HCT116 (cell line): ENCODE measurements at regions of chr2 and their contacts with region 1.

Region 1: DNA sequence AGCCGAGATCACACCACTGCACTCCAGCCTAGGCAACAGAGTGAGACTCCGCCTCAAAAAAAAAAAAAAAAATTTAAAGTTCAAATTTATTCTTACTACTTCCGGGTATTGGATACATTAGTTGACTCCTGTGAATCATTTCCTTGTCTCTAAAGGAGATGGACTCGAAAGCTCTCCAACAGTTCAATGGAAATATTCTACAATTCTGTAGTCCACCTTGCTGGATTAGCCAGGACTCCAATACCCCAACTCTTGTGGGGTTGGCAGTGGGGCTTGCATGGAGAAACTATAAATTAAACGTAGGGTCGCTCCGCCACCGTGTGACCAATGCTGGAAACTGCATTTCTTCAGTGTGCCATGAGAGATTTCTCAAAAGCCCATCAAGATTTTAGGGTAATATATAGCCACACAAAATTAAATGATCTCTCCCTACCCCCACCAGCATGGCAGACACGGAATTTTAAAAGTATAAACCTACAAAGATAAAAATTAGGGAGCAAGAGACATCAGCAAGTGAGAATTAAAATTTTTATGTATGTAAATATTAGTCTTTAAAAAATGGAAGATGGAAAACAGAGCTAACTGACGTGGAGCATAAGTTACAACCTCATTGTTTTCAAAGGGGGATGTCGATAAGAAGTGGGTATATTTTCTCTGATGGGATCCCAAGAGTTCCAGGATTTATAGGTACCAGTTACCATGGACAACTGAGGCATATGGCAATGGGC is 27.8 kb upstream of the GAREM2 start:
- DNase-seq: peak; percentile 60
- ATAC-seq: peak; percentile 83
- H3K4me3 ChIP-seq: no peak overlapping the region
- H3K27ac ChIP-seq: no peak overlapping the region
- H3K4me1 ChIP-seq: peaks cover 3% of the 10 kb centered on the region in 2 experiments; a peak in 1 of 4 replicates
- H3K27me3 ChIP-seq: no peaks in the 10 kb centered on the region
- CTCF ChIP-seq: peak; percentile 75 to 92 (median 85)
- POLR2A ChIP-seq: no peak
- RAD21 ChIP-seq: peak; percentile 96

Region 2: DNA sequence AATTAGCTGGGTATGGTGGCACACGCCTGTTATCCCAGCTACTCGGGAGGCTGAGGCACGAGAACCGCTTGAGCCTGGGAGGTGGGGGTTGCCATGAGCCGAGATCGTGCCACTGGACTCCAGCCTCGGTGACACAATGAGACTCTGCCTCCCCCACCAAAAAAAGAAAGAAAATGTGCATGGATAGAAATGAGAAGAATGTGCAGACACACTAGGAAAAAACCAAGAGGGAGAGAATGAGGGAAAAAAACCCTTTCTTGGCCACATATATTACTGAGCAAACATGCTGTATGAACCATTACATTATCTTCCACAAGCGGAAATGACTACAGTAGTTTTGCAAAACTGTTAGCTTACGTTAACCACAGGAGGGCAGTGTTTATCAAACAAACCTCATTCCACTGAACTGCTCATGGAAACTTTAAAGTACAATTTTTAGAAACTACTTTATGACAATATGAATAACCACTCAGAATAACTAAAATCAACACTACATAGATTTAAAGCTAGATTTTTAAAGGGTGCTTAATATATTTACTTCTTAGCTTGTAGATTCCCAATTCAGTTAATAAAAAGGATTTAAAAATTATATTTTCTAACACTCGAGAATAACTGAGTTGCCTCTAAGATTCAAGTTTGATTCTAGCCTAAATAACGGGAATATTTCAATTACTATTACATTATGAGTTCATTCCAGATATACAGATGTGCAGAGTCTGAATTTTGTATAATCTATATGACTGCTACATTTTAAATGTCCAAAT is 293.2 kb before region 1 on chr2:
- CTCF ChIA-PET with region 1: interaction called, 7 read pairs
- POLR2A ChIA-PET with region 1: no interaction called
- RAD21 ChIA-PET with region 1: no interaction called
- intact Hi-C with region 1: loop called (anchors 2 kb)
- DNase-seq: peak; percentile 41
- ATAC-seq: peak; percentile 87
- H3K4me3 ChIP-seq: no peak overlapping the region
- H3K27ac ChIP-seq: no peak overlapping the region
- H3K4me1 ChIP-seq: peaks cover 0 to 9% of the 10 kb centered on the region in 2 experiments; a peak in 3 of 4 replicates
- H3K27me3 ChIP-seq: no peaks in the 10 kb centered on the region
- CTCF ChIP-seq: peak; percentile 62 to 75 (median 68); a peak in 5 of 6 replicates
- POLR2A ChIP-seq: no peak
- RAD21 ChIP-seq: peak; percentile 74

Region 3: DNA sequence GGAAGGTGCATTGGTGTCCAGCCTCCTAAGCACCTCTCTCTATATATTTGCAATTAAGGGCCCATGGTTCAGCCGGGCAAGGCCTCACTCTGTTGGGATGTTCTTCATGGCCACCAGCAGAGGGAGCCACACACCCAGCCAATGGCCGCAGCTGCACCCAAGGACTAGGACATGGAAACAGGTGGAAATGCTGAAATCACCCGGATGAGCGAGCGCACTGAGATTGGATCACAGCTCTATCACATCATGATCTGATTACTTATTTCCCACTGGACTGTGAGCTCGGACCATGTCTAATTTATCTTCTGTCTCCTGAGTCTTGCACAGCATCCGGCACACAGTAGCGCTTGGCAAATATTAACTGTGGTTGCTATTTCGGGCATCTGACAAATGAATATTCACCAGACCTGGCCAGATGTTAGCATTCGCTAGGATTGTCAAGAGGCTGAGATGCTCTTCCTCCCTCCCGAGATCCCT is 194.0 kb before region 1 on chr2:
- CTCF ChIA-PET with region 1: interaction called, 34 read pairs
- POLR2A ChIA-PET with region 1: no interaction called
- RAD21 ChIA-PET with region 1: no interaction called
- intact Hi-C with region 1: loop called (anchors 1 kb)
- DNase-seq: peak; percentile 88
- ATAC-seq: peak; percentile 97
- H3K4me3 ChIP-seq: peak overlapping the region in 1 of 2 experiments; percentile 10; a peak in 2 of 4 replicates
- H3K27ac ChIP-seq: no peak overlapping the region
- H3K4me1 ChIP-seq: peaks cover 0 to 12% of the 10 kb centered on the region in 2 experiments; a peak in 1 of 4 replicates
- H3K27me3 ChIP-seq: no peaks in the 10 kb centered on the region
- CTCF ChIP-seq: peak; percentile 89 to 97 (median 93)
- POLR2A ChIP-seq: no peak
- RAD21 ChIP-seq: peak; percentile 100

Region 4: GRCh38 chr2:25991965-25992364 is 153.2 kb before region 1 on chr2:
- CTCF ChIA-PET with region 1: interaction called, 8 read pairs
- POLR2A ChIA-PET with region 1: no interaction called
- RAD21 ChIA-PET with region 1: interaction called in 1 of 2 experiments, 3 read pairs
- intact Hi-C with region 1: loop called (anchors 1 kb)
- DNase-seq: no peak
- ATAC-seq: peak; percentile 39
- H3K4me3 ChIP-seq: no peak overlapping the region
- H3K27ac ChIP-seq: no peak overlapping the region
- H3K4me1 ChIP-seq: peaks cover 5 to 11% of the 10 kb centered on the region in 2 experiments; a peak in 2 of 4 replicates
- H3K27me3 ChIP-seq: no peaks in the 10 kb centered on the region
- CTCF ChIP-seq: no peak
- POLR2A ChIP-seq: no peak
- RAD21 ChIP-seq: no peak

Region 5: DNA sequence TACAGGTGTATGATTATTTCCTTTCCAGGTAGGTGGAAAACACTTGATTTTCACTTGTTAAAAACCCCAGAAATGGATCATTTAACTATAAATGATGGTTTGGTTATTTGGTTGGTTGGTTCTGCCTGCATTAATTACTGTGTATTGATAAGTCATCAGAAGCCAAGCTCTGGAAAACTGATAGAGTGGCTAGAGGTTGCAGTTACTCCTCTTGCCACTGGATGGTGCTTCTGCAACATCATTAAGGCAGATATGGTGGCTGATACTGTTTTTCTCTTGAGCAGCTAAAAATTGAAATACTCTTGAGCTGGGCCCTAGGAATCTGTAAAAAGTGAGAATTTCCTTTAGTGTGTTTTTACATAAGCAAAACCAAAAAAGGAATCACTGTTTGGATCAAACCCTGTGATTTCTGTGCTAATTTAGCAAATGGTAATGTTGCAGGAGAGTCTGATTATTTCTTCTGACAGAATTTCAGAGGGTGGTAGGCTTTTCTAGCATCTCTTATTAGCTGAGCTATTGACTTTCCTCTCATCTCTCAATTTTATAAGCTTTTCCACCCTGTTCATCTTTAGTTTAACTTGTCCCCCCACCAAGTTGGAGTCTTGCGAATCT is 57.0 kb before region 1 on chr2:
- CTCF ChIA-PET with region 1: interaction called, 6 read pairs
- POLR2A ChIA-PET with region 1: no interaction called
- RAD21 ChIA-PET with region 1: no interaction called
- intact Hi-C with region 1: loop called (anchors 2 kb)
- DNase-seq: no peak
- ATAC-seq: peak; percentile 65
- H3K4me3 ChIP-seq: no peak overlapping the region
- H3K27ac ChIP-seq: no peak overlapping the region
- H3K4me1 ChIP-seq: peaks cover 18 to 32% of the 10 kb centered on the region in 2 experiments
- H3K27me3 ChIP-seq: no peaks in the 10 kb centered on the region
- CTCF ChIP-seq: peak; percentile 31 to 85 (median 74); a peak in 5 of 6 replicates
- POLR2A ChIP-seq: no peak
- RAD21 ChIP-seq: peak; percentile 68

Region 6: GRCh38 chr2:26469092-26469710 is 324.1 kb after region 1 on chr2:
- CTCF ChIA-PET with region 1: no interaction called
- POLR2A ChIA-PET with region 1: no interaction called
- RAD21 ChIA-PET with region 1: no interaction called
- intact Hi-C with region 1: loop called (anchors 5 kb)
- DNase-seq: peak; percentile 74
- ATAC-seq: peak; percentile 70
- H3K4me3 ChIP-seq: no peak overlapping the region
- H3K27ac ChIP-seq: no peak overlapping the region
- H3K4me1 ChIP-seq: no peaks in the 10 kb centered on the region
- H3K27me3 ChIP-seq: no peaks in the 10 kb centered on the region
- CTCF ChIP-seq: peak; percentile 81 to 87 (median 84)
- POLR2A ChIP-seq: no peak
- RAD21 ChIP-seq: peak; percentile 91